WTC11 (cell line): ENCODE measurements at regions of chr6 and their contacts with region 1.

Region 1: GRCh38 chr6:35452186-35453090 is at the start of gene FANCE:
- DNase-seq: peak; percentile 100
- ATAC-seq: peak; percentile 95
- H3K4me3 Mint-ChIP-seq: peak within 1 kb of the TSS; percentile 68
- H3K27ac Mint-ChIP-seq: peak within 1 kb of the TSS; percentile 53; the same call in 1 of the 2 replicates
- H3K4me1 Mint-ChIP-seq: peaks cover 34% of the 10 kb centered on the region
- H3K27me3 Mint-ChIP-seq: peaks cover 11% of the 10 kb centered on the region
- CTCF ChIP-seq: no peak
- total RNA-seq, gene FANCE: 15.7 to 22.3 TPM (median 17.6 TPM) in 3 replicates

Region 2: GRCh38 chr6:35297601-35298481 is 154.6 kb before region 1 on chr6 and contains the start of gene DEF6:
- CTCF ChIA-PET with region 1: interaction called, 24 read pairs
- POLR2A ChIA-PET with region 1: no interaction called
- DNase-seq: peak; percentile 90
- ATAC-seq: peak; percentile 94
- H3K4me3 Mint-ChIP-seq: peak within 1 kb of the TSS; percentile 46
- H3K27ac Mint-ChIP-seq: 0 out of 2 replicates have a peak within 1 kb of the TSS, but pooled peaks have one; percentile 41
- H3K4me1 Mint-ChIP-seq: peaks cover 35% of the 10 kb centered on the region
- H3K27me3 Mint-ChIP-seq: 0 out of 2 replicates have a peak, but pooled peaks cover 4% of the 10 kb centered on the region
- CTCF ChIP-seq: no peak; the same call in 1 of the 2 replicates
- total RNA-seq, gene DEF6: 11.3 to 12.8 TPM (median 11.4 TPM) in 3 replicates

Region 3: DNA sequence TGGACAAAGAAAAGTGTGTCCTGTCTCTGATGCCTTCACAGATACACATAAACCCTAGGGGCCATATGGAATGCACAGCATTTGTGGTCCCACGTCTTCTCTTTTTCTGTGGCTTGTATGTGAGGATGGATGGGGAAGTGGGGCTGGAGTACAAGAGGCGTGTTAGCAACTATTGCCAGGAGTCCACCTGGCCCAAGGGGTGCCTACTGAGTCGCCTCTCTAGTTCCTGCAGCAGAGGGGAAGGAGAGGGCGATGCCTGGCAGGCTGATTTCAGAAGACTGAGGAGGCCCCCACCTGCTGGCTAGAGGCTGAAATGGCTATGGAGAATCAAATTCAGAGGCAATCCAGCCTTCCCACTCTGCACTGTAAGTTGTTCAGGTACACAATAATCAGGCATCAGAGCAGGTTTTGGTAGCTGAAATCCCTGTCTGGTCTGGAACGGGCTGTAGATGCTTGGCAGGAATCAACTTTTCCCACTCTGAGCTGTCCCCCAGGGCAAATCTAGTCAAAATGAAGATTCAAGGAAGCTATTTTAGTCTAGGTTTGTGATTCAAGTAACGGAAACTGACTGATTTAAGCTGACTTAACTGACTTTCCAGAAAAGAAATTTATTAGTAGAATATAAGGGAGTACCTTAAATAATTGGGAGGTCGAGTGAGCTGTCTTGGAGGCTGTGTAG is 125.0 kb before region 1 on chr6:
- CTCF ChIA-PET with region 1: interaction called, 19 read pairs
- POLR2A ChIA-PET with region 1: interaction called, 3 read pairs
- DNase-seq: peak; percentile 76
- ATAC-seq: peak; percentile 98
- H3K4me3 Mint-ChIP-seq: no peak overlapping the region
- H3K27ac Mint-ChIP-seq: no peak overlapping the region
- H3K4me1 Mint-ChIP-seq: peaks cover 9% of the 10 kb centered on the region
- H3K27me3 Mint-ChIP-seq: peaks cover 1% of the 10 kb centered on the region; the same call in 1 of the 2 replicates
- CTCF ChIP-seq: 0 out of 2 replicates have a peak, but pooled peaks have one; percentile 33

Region 4: GRCh38 chr6:35359751-35360348 is 92.6 kb before region 1 on chr6:
- CTCF ChIA-PET with region 1: interaction called, 11 read pairs
- POLR2A ChIA-PET with region 1: no interaction called
- DNase-seq: no peak
- ATAC-seq: no peak; the same call in 1 of the 2 replicates
- H3K4me3 Mint-ChIP-seq: 0 out of 2 replicates have a peak overlapping the region, but pooled peaks have one; percentile 17
- H3K27ac Mint-ChIP-seq: peak overlapping the region; percentile 64
- H3K4me1 Mint-ChIP-seq: peaks cover 36% of the 10 kb centered on the region
- H3K27me3 Mint-ChIP-seq: no peaks in the 10 kb centered on the region
- CTCF ChIP-seq: no peak

Region 5: GRCh38 chr6:35415065-35415991 is 37.1 kb before region 1 on chr6:
- CTCF ChIA-PET with region 1: interaction called, 38 read pairs
- POLR2A ChIA-PET with region 1: interaction called, 3 read pairs
- DNase-seq: peak; percentile 64
- ATAC-seq: peak; percentile 84
- H3K4me3 Mint-ChIP-seq: no peak overlapping the region
- H3K27ac Mint-ChIP-seq: peak overlapping the region; percentile 0; the same call in 1 of the 2 replicates
- H3K4me1 Mint-ChIP-seq: peaks cover 24% of the 10 kb centered on the region
- H3K27me3 Mint-ChIP-seq: no peaks in the 10 kb centered on the region
- CTCF ChIP-seq: no peak

Region 6: DNA sequence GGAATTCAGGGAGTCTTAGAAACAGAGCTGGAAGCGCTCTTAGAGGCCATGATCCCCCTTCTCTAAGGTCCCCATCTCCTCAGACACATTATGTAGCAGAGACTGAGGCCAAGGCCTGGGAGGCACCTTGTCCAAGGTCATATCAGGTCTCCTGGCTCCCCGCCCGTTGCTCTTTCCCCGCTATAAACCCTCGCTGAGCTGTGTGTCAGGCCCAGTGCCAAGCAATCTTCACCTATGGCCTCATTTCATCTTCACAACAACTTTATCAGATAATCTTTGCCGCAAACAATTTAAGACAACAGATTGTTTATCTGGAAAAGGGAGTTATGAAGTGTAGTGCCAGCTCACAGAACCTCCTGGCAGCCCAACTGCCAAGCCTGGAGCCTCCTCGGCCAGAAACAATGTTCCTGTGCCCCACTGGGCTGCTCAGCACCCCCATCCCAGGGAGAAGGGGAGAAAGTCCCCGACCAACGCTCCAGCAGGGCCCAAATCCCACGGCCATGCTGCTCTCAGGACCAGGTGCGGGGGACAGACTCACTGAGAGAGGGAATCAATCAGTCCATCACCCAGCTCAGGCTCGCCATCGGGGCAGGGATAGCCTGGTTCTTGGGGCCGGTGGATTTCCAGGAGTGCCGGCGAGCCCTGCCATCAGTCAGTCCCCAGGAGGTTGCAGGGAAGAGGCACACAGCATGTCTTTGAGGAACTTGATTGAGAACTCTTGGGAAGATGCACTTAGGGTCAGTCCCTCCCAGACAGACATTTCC is 17.2 kb before region 1 on chr6:
- CTCF ChIA-PET with region 1: interaction called, 13 read pairs
- POLR2A ChIA-PET with region 1: interaction called, 3 read pairs
- DNase-seq: no peak
- ATAC-seq: no peak
- H3K4me3 Mint-ChIP-seq: no peak overlapping the region
- H3K27ac Mint-ChIP-seq: no peak overlapping the region; the same call in 1 of the 2 replicates
- H3K4me1 Mint-ChIP-seq: peaks cover 3% of the 10 kb centered on the region; the same call in 1 of the 2 replicates
- H3K27me3 Mint-ChIP-seq: no peaks in the 10 kb centered on the region
- CTCF ChIP-seq: no peak